AG04449 (cell line): ENCODE measurements at regions of chr7 and their contacts with region 1.

Region 1: GRCh38 chr7:93902777-93903423 is 3.5 kb upstream of the GNGT1 start:
- DNase-seq: no peak
- H3K4me3 ChIP-seq: no peak overlapping the region
- CTCF ChIP-seq: peak; percentile 67

Region 2: DNA sequence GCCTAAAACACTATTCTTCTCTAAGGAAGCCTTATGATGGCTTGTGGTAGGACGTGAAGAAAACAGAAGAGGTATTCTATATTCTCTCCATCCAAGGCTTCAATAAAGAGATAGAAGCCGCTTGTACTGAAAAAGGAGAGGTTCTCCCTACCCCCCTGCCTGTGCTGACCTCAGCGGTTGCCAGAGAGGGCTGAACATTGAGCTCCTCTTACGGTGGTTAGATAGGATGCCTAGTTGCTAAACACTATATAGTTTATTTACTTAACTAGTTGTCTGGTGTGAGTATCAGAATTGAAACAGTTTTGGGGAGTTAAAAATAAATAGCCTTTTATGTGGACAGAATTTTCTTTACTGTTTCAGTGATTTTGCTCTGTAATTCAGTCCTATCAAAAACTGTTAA is 124.5 kb before region 1 on chr7:
- CTCF ChIA-PET with region 1: no interaction called
- POLR2A ChIA-PET with region 1: no interaction called
- DNase-seq: no peak
- H3K4me3 ChIP-seq: no peak overlapping the region
- CTCF ChIP-seq: no peak

Region 3: GRCh38 chr7:93799750-93800357 is 103.0 kb before region 1 on chr7:
- CTCF ChIA-PET with region 1: interaction called, 10 read pairs
- POLR2A ChIA-PET with region 1: no interaction called
- DNase-seq: no peak
- H3K4me3 ChIP-seq: no peak overlapping the region
- CTCF ChIP-seq: peak; percentile 21

Region 4: DNA sequence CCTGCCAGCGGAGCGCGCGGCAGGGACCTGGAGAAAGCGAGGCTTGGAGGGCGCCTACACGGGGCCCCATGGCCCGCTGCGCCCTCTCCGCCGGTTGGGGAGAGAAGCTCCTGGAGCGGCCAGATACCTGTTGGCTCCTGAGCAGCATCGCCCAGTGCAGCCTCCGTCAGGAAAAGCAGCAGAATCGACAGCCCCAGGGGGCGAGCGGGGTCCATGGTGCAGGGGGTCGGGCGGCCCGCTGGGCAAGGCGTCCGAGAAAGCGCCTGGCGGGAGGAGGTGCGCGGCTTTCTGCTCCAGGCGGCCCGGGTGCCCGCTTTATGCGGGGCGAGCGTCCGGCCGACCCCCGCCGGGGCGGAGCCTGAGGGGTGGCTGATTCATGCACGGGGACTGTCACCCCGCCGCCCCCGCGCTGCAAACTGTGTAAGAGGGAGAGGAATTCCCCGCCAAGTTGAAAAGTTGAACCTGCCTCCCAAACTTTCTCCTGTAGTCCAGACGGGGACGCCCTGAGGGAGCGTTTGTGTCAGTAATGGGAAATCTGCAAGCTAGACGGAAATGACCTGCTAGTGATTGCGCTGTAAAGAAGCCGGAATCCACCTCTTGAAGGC is 12.3 kb before region 1 on chr7 and contains the start of gene TFPI2:
- CTCF ChIA-PET with region 1: interaction called, 73 read pairs
- POLR2A ChIA-PET with region 1: no interaction called
- DNase-seq: no peak
- H3K4me3 ChIP-seq: peak within 1 kb of the TSS; percentile 70
- CTCF ChIP-seq: no peak

Region 5: DNA sequence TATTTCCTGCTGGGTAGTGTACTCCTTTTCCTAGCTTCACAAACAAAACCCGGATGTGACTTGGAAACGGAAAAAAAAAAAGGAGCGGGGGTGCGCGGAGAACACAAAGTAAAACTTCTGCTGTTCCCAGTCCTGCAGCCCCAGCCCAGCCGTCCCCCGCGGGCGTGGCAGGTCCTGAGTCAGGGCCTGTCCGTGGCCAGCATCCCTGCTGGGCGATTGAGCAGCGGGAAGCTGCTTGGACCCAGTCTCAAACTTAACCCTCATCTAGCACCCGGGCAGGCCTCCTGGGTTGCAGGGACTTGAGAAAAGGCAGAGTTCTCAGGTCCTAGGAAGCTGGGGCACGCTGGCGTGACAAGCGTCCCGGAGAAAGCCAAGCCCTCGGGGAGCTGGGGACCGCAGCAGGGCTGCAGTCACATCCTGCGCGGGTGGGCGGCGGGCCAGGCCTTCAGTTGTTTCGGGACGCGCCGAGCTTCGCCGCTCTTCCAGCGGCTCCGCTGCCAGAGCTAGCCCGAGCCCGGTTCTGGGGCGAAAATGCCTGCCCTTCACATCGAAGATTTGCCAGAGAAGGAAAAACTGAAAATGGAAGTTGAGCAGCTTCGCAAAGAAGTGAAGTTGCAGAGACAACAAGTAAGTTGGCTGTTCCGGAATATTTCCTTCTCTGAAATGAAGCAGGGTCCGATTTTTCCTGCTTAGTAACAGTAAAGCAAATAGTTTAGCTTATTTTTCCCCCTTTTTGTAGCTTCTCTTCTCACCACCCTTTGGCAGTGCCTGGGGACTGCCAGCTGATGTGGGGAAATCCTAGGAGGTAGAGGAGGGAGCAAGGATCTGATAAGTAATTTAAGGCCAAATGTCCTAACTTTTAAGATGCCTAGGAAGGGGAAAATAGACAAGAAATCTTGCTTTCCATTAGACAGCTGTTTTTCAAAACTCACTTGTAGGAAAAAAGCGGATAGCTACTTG is 19.0 kb after region 1 on chr7 and contains the start of gene GNG11:
- CTCF ChIA-PET with region 1: interaction called, 26 read pairs
- POLR2A ChIA-PET with region 1: no interaction called
- DNase-seq: no peak
- H3K4me3 ChIP-seq: peak within 1 kb of the TSS; percentile 74
- CTCF ChIP-seq: no peak

Region 6: DNA sequence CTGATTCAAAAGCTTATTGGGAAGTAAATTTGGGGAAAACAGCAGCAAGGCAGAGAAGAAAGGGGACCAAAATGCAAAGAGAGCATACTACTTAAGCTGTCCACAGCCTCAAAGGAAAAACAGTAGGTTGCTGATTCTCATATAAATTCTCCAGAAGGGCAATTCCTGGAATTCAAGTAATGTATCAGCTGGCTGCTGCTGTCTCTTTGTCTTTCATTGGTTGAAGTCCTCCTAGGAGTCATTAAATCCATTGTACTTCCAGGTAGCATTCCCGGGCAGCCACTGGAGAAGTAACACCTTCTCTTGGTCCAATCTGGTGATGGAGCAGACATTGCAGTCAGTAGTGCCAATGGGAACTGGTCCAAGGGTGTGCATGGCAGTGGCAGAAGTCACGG is 78.6 kb after region 1 on chr7:
- CTCF ChIA-PET with region 1: no interaction called
- POLR2A ChIA-PET with region 1: no interaction called
- DNase-seq: no peak
- H3K4me3 ChIP-seq: no peak overlapping the region
- CTCF ChIP-seq: no peak

Region 7: GRCh38 chr7:94087664-94088352 is 184.9 kb after region 1 on chr7:
- CTCF ChIA-PET with region 1: interaction called, 141 read pairs
- POLR2A ChIA-PET with region 1: no interaction called
- DNase-seq: peak; percentile 23
- H3K4me3 ChIP-seq: no peak overlapping the region; the same call in 1 of the 2 replicates
- CTCF ChIP-seq: peak; percentile 68

Region 8: DNA sequence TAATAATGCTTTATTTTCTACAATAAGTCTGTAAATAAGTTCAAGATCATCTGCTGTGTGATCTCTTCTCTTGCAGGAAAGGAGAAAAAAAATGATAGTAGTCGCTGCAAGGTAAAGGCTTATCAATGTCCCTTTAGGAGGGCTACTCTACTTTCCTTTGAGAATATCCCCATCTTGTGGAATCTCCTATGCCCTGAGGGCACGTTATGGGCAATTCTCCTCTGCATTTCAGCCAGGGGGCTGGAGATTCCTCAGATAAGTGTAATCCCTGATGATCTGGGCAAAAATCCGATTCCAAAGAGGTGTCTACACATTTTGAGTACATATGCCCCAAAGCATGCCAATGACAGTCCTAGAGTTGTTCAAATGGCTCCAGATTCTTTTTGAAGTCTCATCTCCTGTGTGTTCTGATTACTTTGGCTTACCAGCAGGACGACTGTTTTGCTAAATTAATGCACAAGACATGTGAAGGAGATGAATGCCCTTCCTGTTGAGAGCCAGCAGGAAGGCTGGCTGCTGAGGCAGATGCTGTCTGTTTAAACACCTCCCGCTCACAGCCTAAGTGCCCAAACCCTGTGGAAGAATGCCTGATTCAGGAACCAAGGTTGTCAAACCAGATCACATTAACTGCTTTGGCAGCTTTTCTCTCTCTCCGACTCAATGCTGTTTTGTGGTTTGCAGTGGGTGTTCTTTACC is 320.6 kb after region 1 on chr7:
- CTCF ChIA-PET with region 1: interaction called, 12 read pairs
- POLR2A ChIA-PET with region 1: no interaction called
- DNase-seq: no peak
- H3K4me3 ChIP-seq: no peak overlapping the region
- CTCF ChIP-seq: peak; percentile 52